Right lobe of liver (tissue), 6 donors: ENCODE measurements at regions of chr2 and their contacts with region 1.

Region 1: DNA sequence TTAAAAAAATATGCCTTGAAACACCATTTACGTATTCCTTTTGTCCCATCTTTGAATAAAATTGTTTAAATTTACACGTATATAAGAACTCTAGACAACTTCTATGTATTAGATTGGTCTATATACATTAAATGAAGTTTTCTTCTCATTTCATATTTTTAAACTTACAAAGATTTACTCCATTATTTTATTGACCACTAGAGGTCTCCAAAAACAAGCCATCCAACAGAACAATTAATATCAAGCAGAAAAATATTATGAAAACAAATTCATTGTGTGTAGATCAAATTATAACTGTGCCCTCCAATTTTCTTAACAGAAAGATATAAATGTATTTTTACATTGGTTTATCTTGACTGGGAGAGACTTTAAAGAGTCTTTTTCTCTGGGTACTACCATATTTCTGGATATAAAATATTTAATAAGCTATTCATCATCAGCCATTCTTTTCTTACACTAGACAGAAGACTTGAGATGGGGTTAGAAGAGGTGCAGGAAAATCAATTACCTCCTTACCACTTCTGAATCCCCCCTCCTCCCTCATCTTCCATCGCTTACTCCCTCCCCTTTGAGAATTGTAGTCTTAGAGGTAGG is 66.5 kb downstream of the DPP4 start:
- DNase-seq: no peak
- ATAC-seq: peak in 2 of 4 donors; percentile 28 to 36
- H3K4me3 ChIP-seq: no peak overlapping the region
- H3K27ac ChIP-seq: no peak overlapping the region
- H3K4me1 ChIP-seq: no peaks in the 10 kb centered on the region
- H3K27me3 ChIP-seq: no peaks in the 10 kb centered on the region
- CTCF ChIP-seq: peak; percentile 62 to 81 (median 74)
- POLR2A ChIP-seq: no peak

Region 2: DNA sequence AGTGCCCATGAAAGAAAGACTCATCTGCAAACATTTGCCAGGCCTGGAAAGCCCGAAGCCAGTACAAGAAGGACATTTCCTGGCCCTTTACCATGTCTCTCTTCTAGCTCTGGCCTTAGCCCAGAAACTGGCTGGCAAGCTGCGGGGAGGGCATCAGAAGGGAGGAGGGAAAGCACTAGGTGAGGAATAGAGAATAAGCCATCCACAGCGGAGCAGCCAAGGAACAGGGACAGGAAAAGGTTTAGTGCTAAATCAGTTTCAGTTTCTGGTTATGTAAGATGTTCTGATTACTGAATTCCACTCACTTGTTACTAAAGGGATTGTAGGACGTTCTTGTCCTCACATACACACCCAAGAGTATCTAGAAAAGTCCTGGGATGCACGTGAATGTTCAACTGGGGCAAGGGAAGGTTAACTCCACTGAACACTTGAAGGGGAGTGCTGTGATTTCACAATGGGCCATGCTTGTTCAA is 111.1 kb after region 1 on chr2:
- intact Hi-C with region 1: loop called (anchors 5 to 10 kb)
- DNase-seq: peak in 2 of 3 donors; percentile 42 to 67
- ATAC-seq: peak; percentile 60 to 80 (median 70)
- H3K4me3 ChIP-seq: no peak overlapping the region
- H3K27ac ChIP-seq: peak overlapping the region in 2 of 3 donors; percentile 10 to 37
- H3K4me1 ChIP-seq: peaks cover 0 to 17% (median under 1%) of the 10 kb centered on the region in 4 donors
- H3K27me3 ChIP-seq: no peaks in the 10 kb centered on the region
- CTCF ChIP-seq: no peak
- POLR2A ChIP-seq: no peak

Region 3: GRCh38 chr2:162123806-162124758 is 116.5 kb after region 1 on chr2:
- intact Hi-C with region 1: loop called (anchors 5 to 10 kb)
- DNase-seq: no peak
- ATAC-seq: peak; percentile 71 to 87 (median 82)
- H3K4me3 ChIP-seq: no peak overlapping the region
- H3K27ac ChIP-seq: no peak overlapping the region
- H3K4me1 ChIP-seq: no peaks in the 10 kb centered on the region
- H3K27me3 ChIP-seq: no peaks in the 10 kb centered on the region
- CTCF ChIP-seq: peak; percentile 80 to 86 (median 82)
- POLR2A ChIP-seq: no peak

Region 4: DNA sequence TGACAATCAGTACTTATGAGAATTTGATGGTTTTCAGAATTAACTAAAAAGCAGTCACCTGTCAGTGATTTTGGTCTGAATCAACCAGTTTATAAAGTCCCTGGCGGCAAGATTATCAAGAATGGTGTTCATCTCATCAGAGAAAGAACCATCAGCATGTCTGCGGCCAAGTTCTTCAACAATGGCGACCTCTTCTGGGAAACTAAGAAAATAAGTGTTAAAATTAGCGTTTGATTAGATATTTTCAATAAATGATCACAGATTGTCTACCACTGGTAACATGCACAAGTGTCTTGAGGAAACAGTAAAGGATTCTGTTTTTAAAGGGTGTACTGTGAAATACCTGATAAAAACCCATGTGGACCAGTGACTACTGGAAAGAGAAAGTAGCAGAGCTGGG is 136.4 kb after region 1 on chr2:
- intact Hi-C with region 1: no loop called
- DNase-seq: no peak
- ATAC-seq: no peak
- H3K4me3 ChIP-seq: no peak overlapping the region
- H3K27ac ChIP-seq: no peak overlapping the region
- H3K4me1 ChIP-seq: no peaks in the 10 kb centered on the region
- H3K27me3 ChIP-seq: no peaks in the 10 kb centered on the region
- CTCF ChIP-seq: no peak
- POLR2A ChIP-seq: no peak